ENCODE measurements at regions of chrX and their contacts with region 1.

Region 1: DNA sequence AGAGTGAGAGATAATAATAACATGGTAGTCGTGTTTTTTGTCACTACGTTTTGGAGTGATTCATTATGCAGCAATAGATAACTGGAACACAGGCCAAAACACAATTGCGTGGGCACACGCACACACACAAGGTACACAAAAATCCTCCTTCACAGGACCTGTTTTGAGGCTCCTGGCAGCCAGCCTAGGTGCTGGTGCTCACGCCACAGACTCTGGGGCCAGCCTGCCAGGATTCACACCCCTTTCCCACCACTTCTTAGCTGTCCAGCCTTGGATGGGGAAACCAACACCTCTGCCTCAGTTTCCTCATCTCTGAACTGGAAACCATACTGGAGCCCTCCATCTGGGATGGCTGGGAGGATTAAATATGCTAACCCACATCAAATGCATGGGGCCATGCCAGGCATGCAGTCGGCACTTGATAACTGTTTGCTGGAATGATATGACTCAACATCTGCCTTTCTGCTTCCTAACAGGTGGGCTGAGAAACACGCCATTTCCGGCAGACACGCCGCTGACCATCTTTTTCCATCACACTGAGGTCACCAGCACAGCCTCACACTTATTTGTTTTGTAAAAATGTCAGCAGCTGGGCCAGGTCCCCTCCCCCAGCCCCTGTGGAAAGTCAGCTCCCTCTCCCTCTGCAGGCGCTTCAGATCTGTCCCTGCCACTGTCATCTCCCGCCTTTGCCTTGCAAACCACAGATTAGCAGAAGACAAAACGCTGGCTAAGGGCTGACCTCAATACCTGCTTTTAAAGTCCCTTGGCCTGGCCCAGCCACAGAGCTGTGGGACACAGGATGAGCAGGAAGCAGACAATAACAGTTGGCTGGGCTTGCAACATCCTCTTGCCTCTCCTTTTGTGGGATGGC is 237.5 kb downstream of the BCOR start:
- DNase-seq: peak; percentile 89
- H3K4me3 Mint-ChIP-seq: peak overlapping the region; percentile 35
- H3K27ac Mint-ChIP-seq: peak overlapping the region; percentile 91
- H3K4me1 Mint-ChIP-seq: peaks cover 60% of the 10 kb centered on the region
- H3K27me3 Mint-ChIP-seq: no peaks in the 10 kb centered on the region

Region 2: GRCh38 chrX:39772057-39772832 is 88.0 kb before region 1 on chrX:
- CTCF ChIA-PET with region 1: no interaction called
- POLR2A ChIA-PET with region 1: interaction called, 16 read pairs
- DNase-seq: peak; percentile 68
- H3K4me3 Mint-ChIP-seq: peak overlapping the region; percentile 38
- H3K27ac Mint-ChIP-seq: peak overlapping the region; percentile 96
- H3K4me1 Mint-ChIP-seq: peaks cover 35% of the 10 kb centered on the region
- H3K27me3 Mint-ChIP-seq: no peaks in the 10 kb centered on the region

Region 3: DNA sequence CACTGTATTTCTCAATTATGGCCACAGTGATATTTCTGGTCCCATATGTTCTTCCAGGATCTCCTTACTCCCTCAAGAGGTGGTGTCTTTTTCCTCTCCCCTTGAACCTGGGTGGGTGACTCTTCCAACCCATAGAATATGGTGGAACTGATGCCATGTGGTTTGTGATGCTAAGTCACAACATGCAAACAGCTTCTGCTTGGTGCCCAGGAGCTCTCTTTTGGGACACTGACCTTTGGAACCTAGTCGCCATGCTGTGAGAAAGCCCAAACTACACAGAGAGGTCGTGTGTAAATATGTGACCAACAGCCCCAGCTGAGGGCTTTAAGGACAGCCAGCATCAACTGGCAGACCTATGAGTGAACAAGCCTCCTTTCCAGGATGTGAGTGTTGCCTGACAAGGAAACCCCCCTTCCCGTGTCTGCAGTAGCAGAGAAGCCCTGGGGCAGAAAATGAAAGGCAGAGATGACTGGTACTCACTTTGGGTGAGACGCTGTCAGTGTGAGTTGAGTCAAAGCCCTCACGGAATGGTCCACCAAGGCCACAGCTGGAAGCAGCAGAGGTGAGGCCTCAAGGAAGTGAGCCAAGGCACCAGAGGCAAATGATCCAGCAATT is 14.1 kb after region 1 on chrX:
- CTCF ChIA-PET with region 1: interaction called, 4 read pairs
- POLR2A ChIA-PET with region 1: interaction called, 34 read pairs
- DNase-seq: peak; percentile 75
- H3K4me3 Mint-ChIP-seq: no peak overlapping the region
- H3K27ac Mint-ChIP-seq: peak overlapping the region; percentile 72
- H3K4me1 Mint-ChIP-seq: peaks cover 50% of the 10 kb centered on the region
- H3K27me3 Mint-ChIP-seq: no peaks in the 10 kb centered on the region

Region 4: GRCh38 chrX:40097497-40098263 is 237.5 kb after region 1 on chrX and contains the start of gene BCOR:
- CTCF ChIA-PET with region 1: no interaction called
- POLR2A ChIA-PET with region 1: interaction called, 41 read pairs
- DNase-seq: peak; percentile 81
- H3K4me3 Mint-ChIP-seq: peak within 1 kb of the TSS; percentile 92
- H3K27ac Mint-ChIP-seq: peak within 1 kb of the TSS; percentile 90
- H3K4me1 Mint-ChIP-seq: peaks cover 22% of the 10 kb centered on the region
- H3K27me3 Mint-ChIP-seq: no peaks in the 10 kb centered on the region
- total RNA-seq, gene BCOR: 46.6 to 46.8 TPM

Region 5: DNA sequence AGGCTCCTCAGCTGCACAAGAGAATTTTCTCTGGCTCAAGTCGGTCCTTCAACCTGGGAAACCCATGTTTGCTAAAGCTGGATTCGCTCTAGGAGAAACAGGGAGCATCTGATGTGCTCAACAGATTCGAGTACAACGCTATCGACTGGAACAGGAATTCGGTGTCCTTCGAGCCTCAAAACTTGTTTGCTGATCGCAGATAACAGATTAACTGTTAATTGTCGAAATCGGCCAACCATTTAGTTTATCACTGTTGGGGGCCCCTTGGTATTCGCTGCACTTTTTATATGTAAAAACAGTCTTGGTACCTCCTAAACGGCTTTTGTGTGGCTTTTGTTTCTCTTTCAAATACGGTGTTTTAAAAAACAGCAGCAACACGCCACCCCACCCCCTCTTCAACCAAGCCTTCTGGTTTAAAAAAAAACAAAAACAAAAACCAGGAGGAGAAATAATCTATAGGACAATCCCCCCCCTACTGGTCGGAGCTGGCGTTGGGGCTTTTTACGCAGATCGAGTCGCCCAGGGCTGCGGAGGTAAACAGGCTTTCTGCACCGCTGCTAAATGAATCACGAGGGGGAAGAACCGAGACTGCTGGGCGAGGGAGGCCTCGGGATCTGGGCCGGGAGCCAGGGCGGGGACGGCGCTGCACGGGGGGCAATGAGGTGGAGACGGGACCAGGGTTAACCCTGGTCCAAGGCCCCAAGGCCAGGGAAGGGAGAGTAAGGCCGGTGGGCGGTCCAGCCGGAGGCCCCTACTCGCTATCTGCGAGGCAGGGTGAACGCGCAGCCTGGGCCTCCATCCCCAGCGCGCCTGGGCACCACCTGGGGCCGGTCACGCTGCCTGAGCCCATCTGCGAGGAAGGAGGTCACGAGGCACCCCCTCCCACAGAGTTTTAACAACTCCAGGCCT is 309.2 kb after region 1 on chrX:
- CTCF ChIA-PET with region 1: interaction called, 3 read pairs
- POLR2A ChIA-PET with region 1: interaction called, 25 read pairs
- DNase-seq: peak; percentile 88
- H3K4me3 Mint-ChIP-seq: peak overlapping the region; percentile 83
- H3K27ac Mint-ChIP-seq: peak overlapping the region; percentile 97
- H3K4me1 Mint-ChIP-seq: peaks cover 55% of the 10 kb centered on the region
- H3K27me3 Mint-ChIP-seq: no peaks in the 10 kb centered on the region